ENCODE measurements at regions of chr9 and their contacts with region 1.

Region 1: DNA sequence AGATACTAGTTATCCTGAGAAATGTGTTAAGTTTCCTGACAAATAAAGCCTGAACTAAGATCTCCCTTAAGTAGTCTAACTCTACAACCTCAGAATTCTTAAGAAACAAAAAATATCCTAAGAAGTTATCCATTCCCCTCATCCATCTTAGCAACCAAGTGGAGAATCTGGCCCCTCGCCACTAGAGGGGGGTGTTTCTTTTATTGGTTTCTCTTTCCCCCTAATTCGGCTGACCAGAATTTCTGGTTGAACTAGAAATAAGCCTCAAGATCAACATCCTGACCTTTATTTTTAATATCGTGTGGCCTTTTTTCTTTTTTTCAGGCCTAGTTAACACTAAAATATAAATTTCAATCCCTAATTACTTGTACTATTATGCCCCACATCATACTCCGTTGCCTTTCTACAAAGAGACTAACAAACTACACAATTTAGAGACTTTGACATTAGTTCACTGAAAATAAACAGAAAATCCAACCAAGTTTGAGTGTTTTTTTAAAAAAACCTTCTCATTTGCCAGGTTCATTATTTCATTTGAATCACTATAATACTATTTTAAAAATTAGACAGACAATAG is 14.3 kb upstream of the NR4A3 start:
- DNase-seq: peak; percentile 53 to 85 (median 59)
- ATAC-seq: peak; percentile 84
- H3K4me3 ChIP-seq: no peak overlapping the region
- H3K4me3 Mint-ChIP-seq: no peak overlapping the region
- H3K27ac ChIP-seq: no peak overlapping the region
- H3K27ac Mint-ChIP-seq: no peak overlapping the region
- H3K4me1 ChIP-seq: no peaks in the 10 kb centered on the region
- H3K4me1 Mint-ChIP-seq: no peaks in the 10 kb centered on the region
- H3K27me3 ChIP-seq: no peaks in the 10 kb centered on the region
- H3K27me3 Mint-ChIP-seq: peaks cover 4% of the 10 kb centered on the region
- CTCF ChIP-seq: peak; percentile 95

Region 2: GRCh38 chr9:99840072-99840471 is 32.7 kb after region 1 on chr9:
- CTCF ChIA-PET with region 1: no interaction called
- POLR2A ChIA-PET with region 1: no interaction called
- intact Hi-C with region 1: loop called in 1 of 2 experiments (anchors 2 kb)
- DNase-seq: no peak
- ATAC-seq: no peak
- H3K4me3 ChIP-seq: no peak overlapping the region
- H3K4me3 Mint-ChIP-seq: no peak overlapping the region
- H3K27ac ChIP-seq: no peak overlapping the region
- H3K27ac Mint-ChIP-seq: no peak overlapping the region
- H3K4me1 ChIP-seq: no peaks in the 10 kb centered on the region
- H3K4me1 Mint-ChIP-seq: no peaks in the 10 kb centered on the region
- H3K27me3 ChIP-seq: no peaks in the 10 kb centered on the region
- H3K27me3 Mint-ChIP-seq: no peaks in the 10 kb centered on the region
- CTCF ChIP-seq: no peak

Region 3: DNA sequence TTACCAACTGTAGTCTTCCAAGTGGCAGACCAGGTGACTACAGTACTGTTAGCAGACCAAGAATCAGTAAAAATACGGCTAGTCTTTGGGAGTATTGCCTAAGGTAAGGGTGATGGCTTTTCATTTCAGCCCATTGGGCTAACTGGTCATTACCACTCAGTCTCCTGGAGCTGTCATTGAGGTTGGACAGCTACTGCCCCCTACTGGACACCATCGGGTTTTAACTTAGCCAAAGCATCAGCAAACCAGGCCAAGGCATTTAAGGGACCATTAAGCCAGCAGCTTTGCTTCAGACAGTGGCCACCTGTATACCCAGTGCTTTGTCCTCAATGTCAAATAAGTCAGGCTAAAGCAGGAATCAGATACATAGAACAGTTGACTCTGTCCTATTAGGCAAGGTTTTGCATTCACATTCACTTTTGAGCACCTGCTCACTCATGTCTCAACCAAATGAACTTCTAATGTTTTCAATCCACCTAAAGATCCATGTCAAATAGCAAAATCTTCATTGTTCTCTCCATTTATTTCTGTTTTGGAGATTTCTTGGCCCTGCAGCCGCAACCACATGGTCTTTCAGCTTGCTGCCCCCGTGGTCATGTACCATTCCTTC is 408.9 kb after region 1 on chr9:
- CTCF ChIA-PET with region 1: no interaction called
- POLR2A ChIA-PET with region 1: no interaction called
- intact Hi-C with region 1: loop called in 1 of 2 experiments (anchors 5 kb)
- DNase-seq: peak; percentile 11 to 76 (median 44)
- ATAC-seq: no peak
- H3K4me3 ChIP-seq: no peak overlapping the region
- H3K4me3 Mint-ChIP-seq: no peak overlapping the region
- H3K27ac ChIP-seq: no peak overlapping the region
- H3K27ac Mint-ChIP-seq: no peak overlapping the region
- H3K4me1 ChIP-seq: no peaks in the 10 kb centered on the region
- H3K4me1 Mint-ChIP-seq: no peaks in the 10 kb centered on the region
- H3K27me3 ChIP-seq: no peaks in the 10 kb centered on the region
- H3K27me3 Mint-ChIP-seq: no peaks in the 10 kb centered on the region
- CTCF ChIP-seq: peak; percentile 50

Measured in CD4-positive, alpha-beta T cell (primary cell).